ENCODE measurements at regions of chr16 and their contacts with region 1.

Region 1: DNA sequence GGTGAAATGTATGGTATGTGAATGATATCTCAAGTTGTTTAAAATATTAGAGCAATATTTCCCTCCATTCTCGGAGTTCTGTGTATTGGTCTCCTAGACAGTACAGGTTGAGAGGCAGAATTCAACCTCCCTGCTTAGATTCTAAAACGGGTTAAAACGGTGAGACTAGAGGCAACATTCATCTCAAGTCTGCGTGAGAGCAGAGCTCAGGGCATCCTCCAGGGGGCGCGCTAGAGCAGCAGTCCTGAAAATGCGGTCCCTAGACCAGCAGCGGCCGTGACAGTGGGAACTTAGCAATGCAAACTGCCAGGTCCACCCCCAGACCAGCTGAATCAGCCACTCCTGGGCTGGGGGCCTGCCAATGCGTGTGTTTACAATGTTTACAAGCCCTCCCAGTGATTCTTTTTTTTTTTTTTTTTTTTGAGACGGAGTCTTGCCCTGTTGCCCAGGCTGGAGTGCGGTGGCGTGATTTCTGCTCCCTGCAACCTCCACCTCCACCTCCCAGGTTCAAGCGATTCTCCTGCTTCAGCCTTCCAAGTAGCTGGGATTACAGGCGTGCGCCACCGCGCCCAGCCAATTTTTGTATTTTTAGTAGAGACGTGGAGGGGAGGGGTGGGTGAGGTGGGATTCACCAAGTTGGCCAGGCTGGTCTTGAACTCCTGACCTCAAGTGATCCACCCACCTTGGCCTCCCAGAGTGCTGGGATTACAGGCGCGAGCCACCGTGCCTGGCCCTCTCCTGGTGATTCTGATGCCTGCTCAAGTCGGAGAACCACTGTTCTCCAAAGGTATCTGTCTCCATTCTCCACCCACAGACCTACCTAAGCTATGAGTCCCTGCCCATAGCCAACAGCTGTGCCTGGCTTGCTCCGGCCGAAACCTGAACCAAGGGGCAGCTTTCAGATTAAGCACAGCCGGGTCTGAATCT is 24.2 kb downstream of the KLHL36 start:
- DNase-seq: peak; percentile 82
- H3K4me3 ChIP-seq: no peak overlapping the region
- H3K27ac ChIP-seq: no peak overlapping the region
- H3K4me1 ChIP-seq: peaks cover 0 to 9% of the 10 kb centered on the region in 2 experiments; a peak in 3 of 4 replicates
- H3K27me3 ChIP-seq: no peaks in the 10 kb centered on the region
- CTCF ChIP-seq: peak; percentile 95
- EP300 ChIP-seq: no peak
- RAD21 ChIP-seq: peak; percentile 68

Region 2: DNA sequence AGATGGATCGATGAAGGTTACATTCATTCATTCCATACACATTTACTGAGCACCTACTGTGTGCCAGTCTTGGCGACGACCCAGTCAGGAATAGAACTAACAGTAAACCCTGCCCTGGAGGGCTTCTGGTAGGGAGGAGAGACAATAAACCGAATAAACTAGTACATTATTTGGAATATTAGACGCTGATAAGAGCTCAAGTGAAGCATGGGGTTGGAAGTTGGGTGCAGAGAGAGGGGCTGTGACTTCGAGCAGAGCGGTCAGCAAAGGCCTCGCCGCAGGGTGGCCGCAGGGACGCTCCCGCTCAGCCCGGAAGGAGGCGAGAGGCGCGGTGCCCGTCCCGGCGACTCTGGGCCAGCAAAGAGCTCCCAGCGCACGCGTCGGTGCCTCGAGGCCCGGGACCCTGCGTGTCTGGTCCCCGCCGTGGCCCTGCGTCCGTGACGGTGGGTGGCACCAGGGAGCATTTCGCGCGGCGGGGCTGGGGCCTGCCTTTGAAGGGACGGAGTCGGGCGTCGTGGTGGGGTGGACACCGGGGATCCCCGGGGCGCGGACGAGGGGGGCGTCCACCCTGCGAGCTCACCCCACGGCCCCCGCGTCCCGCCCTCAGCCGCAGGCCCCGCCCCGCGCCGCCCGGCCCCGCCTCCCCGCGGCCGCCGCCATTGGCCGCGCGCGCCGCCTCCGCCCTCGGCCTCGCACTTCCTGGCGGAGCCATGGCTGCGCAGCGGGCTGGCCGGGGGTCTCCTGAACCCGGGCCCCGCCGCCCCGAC is 24.5 kb before region 1 on chr16 and contains the start of gene KLHL36:
- CTCF ChIA-PET with region 1: interaction called, 15 read pairs
- POLR2A ChIA-PET with region 1: interaction called, 3 read pairs
- DNase-seq: peak; percentile 96
- H3K4me3 ChIP-seq: peak within 1 kb of the TSS; percentile 65 to 74
- H3K27ac ChIP-seq: peak within 1 kb of the TSS; percentile 45 to 70
- H3K4me1 ChIP-seq: peaks cover 12 to 20% of the 10 kb centered on the region in 2 experiments; a peak in 2 of 4 replicates
- H3K27me3 ChIP-seq: no peaks in the 10 kb centered on the region
- CTCF ChIP-seq: no peak
- EP300 ChIP-seq: no peak
- RAD21 ChIP-seq: no peak
- polyA plus RNA-seq, gene KLHL36: 39.8 and 43.3 TPM in 2 replicates

Region 3: GRCh38 chr16:84687715-84688114 is 15.2 kb after region 1 on chr16:
- CTCF ChIA-PET with region 1: interaction called, 47 read pairs
- POLR2A ChIA-PET with region 1: no interaction called
- DNase-seq: no peak
- H3K4me3 ChIP-seq: no peak overlapping the region
- H3K27ac ChIP-seq: peak overlapping the region in 1 of 2 experiments; percentile 50; a peak in 2 of 4 replicates
- H3K4me1 ChIP-seq: no peaks in the 10 kb centered on the region; a peak in 1 of 4 replicates
- H3K27me3 ChIP-seq: no peaks in the 10 kb centered on the region
- CTCF ChIP-seq: no peak
- EP300 ChIP-seq: no peak
- RAD21 ChIP-seq: no peak

Region 4: GRCh38 chr16:84699712-84700445 is 27.3 kb after region 1 on chr16 and contains the start of gene USP10:
- CTCF ChIA-PET with region 1: interaction called, 47 read pairs
- POLR2A ChIA-PET with region 1: no interaction called
- DNase-seq: peak; percentile 100
- H3K4me3 ChIP-seq: peak within 1 kb of the TSS; percentile 65 to 91
- H3K27ac ChIP-seq: peak within 1 kb of the TSS; percentile 58 to 71
- H3K4me1 ChIP-seq: peaks cover 7 to 15% of the 10 kb centered on the region in 2 experiments; a peak in 2 of 4 replicates
- H3K27me3 ChIP-seq: no peaks in the 10 kb centered on the region
- CTCF ChIP-seq: no peak
- EP300 ChIP-seq: no peak
- RAD21 ChIP-seq: no peak
- polyA plus RNA-seq, gene USP10: 41.6 and 49.2 TPM in 2 replicates

Region 5: DNA sequence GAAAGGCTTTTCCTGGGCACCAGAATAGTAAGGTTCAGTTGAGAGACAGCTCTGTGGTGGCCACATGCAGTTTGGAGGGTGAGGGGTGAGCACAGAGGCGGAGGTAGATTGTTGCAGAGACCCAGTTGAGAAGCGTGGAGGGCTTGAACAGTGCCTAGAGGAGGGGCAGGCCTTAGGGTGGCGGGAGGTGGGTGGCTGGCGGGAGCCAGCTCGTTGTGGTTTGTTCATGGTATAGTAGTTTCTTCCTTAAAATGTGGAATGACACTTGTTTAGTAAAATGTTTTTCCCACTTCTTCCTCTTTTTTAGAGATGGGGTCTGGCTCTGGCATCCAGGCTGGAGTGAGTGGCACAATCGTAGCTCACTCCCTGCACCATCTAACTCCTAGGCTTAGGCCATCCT is 41.5 kb after region 1 on chr16:
- CTCF ChIA-PET with region 1: interaction called, 12 read pairs
- POLR2A ChIA-PET with region 1: no interaction called
- DNase-seq: no peak
- H3K4me3 ChIP-seq: no peak overlapping the region
- H3K27ac ChIP-seq: no peak overlapping the region
- H3K4me1 ChIP-seq: peaks cover 3 to 4% of the 10 kb centered on the region in 2 experiments; a peak in 2 of 4 replicates
- H3K27me3 ChIP-seq: no peaks in the 10 kb centered on the region
- CTCF ChIP-seq: no peak
- EP300 ChIP-seq: no peak
- RAD21 ChIP-seq: no peak

Region 6: DNA sequence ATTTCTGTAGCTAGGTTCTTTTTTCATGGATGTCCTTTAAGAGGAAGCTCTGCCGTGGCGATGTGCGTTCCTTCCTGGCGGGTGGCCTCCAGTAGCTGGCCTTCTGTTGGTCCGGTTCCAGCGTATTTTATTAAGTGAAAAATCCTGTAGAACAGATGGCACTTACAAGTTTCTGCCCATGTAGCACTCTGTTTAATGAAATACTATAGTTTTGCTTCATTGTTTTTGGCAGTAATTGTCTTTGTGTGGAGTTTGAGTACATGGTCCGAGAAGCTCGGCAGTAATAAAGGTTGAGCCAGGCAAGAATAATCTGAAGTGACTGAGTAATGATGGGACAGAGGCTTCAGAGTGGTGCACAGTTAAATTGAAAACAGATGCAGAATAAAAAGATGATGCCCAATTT is 47.6 kb after region 1 on chr16:
- CTCF ChIA-PET with region 1: interaction called, 137 read pairs
- POLR2A ChIA-PET with region 1: no interaction called
- DNase-seq: peak; percentile 71
- H3K4me3 ChIP-seq: peak overlapping the region; percentile 12 to 27; a peak in 2 of 4 replicates
- H3K27ac ChIP-seq: peak overlapping the region; percentile 68 to 84
- H3K4me1 ChIP-seq: peaks cover 22 to 30% of the 10 kb centered on the region in 2 experiments; a peak in 3 of 4 replicates
- H3K27me3 ChIP-seq: no peaks in the 10 kb centered on the region
- CTCF ChIP-seq: peak; percentile 10; the same call in 1 of the 2 replicates
- EP300 ChIP-seq: peak in 1 of 2 experiments; percentile 81; a peak in 2 of 4 replicates
- RAD21 ChIP-seq: no peak

Region 7: GRCh38 chr16:84774810-84775209 is 102.3 kb after region 1 on chr16:
- CTCF ChIA-PET with region 1: no interaction called
- POLR2A ChIA-PET with region 1: no interaction called
- DNase-seq: no peak
- H3K4me3 ChIP-seq: no peak overlapping the region
- H3K27ac ChIP-seq: no peak overlapping the region
- H3K4me1 ChIP-seq: no peaks in the 10 kb centered on the region
- H3K27me3 ChIP-seq: no peaks in the 10 kb centered on the region
- CTCF ChIP-seq: no peak
- EP300 ChIP-seq: no peak
- RAD21 ChIP-seq: no peak

Region 8: GRCh38 chr16:84806256-84806889 is 133.8 kb after region 1 on chr16:
- CTCF ChIA-PET with region 1: no interaction called
- POLR2A ChIA-PET with region 1: no interaction called
- DNase-seq: peak; percentile 86
- H3K4me3 ChIP-seq: peak overlapping the region in 1 of 2 experiments; percentile 46; a peak in 3 of 4 replicates
- H3K27ac ChIP-seq: peak overlapping the region; percentile 48 to 82
- H3K4me1 ChIP-seq: peaks cover 9 to 11% of the 10 kb centered on the region in 2 experiments; a peak in 2 of 4 replicates
- H3K27me3 ChIP-seq: no peaks in the 10 kb centered on the region
- CTCF ChIP-seq: peak; percentile 15; the same call in 1 of the 2 replicates
- EP300 ChIP-seq: peak in 1 of 2 experiments; percentile 40; a peak in 1 of 4 replicates
- RAD21 ChIP-seq: no peak

Measured in SK-N-SH (cell line).